AG04449 (cell line): ENCODE measurements at regions of chr7 and their contacts with region 1.

Region 1: GRCh38 chr7:98841179-98841997 is 28.4 kb downstream of the TMEM130 start:
- DNase-seq: peak; percentile 28
- H3K4me3 ChIP-seq: no peak overlapping the region
- CTCF ChIP-seq: peak; percentile 98

Region 2: GRCh38 chr7:97580205-97580604 is 1261.2 kb before region 1 on chr7:
- CTCF ChIA-PET with region 1: no interaction called
- POLR2A ChIA-PET with region 1: no interaction called
- DNase-seq: no peak
- H3K4me3 ChIP-seq: no peak overlapping the region
- CTCF ChIP-seq: no peak

Region 3: GRCh38 chr7:98314469-98314868 is 526.9 kb before region 1 on chr7:
- CTCF ChIA-PET with region 1: no interaction called
- POLR2A ChIA-PET with region 1: no interaction called
- DNase-seq: no peak
- H3K4me3 ChIP-seq: no peak overlapping the region
- CTCF ChIP-seq: no peak

Region 4: GRCh38 chr7:98420966-98421612 is 420.3 kb before region 1 on chr7:
- CTCF ChIA-PET with region 1: interaction called, 33 read pairs
- POLR2A ChIA-PET with region 1: no interaction called
- DNase-seq: no peak
- H3K4me3 ChIP-seq: no peak overlapping the region
- CTCF ChIP-seq: peak; percentile 96

Region 5: GRCh38 chr7:98434095-98434494 is 407.3 kb before region 1 on chr7:
- CTCF ChIA-PET with region 1: interaction called, 135 read pairs
- POLR2A ChIA-PET with region 1: no interaction called
- DNase-seq: no peak
- H3K4me3 ChIP-seq: no peak overlapping the region
- CTCF ChIP-seq: no peak

Region 6: GRCh38 chr7:98826387-98827231 is 14.8 kb before region 1 on chr7:
- CTCF ChIA-PET with region 1: interaction called, 72 read pairs
- POLR2A ChIA-PET with region 1: no interaction called
- DNase-seq: no peak
- H3K4me3 ChIP-seq: no peak overlapping the region
- CTCF ChIP-seq: no peak

Region 7: DNA sequence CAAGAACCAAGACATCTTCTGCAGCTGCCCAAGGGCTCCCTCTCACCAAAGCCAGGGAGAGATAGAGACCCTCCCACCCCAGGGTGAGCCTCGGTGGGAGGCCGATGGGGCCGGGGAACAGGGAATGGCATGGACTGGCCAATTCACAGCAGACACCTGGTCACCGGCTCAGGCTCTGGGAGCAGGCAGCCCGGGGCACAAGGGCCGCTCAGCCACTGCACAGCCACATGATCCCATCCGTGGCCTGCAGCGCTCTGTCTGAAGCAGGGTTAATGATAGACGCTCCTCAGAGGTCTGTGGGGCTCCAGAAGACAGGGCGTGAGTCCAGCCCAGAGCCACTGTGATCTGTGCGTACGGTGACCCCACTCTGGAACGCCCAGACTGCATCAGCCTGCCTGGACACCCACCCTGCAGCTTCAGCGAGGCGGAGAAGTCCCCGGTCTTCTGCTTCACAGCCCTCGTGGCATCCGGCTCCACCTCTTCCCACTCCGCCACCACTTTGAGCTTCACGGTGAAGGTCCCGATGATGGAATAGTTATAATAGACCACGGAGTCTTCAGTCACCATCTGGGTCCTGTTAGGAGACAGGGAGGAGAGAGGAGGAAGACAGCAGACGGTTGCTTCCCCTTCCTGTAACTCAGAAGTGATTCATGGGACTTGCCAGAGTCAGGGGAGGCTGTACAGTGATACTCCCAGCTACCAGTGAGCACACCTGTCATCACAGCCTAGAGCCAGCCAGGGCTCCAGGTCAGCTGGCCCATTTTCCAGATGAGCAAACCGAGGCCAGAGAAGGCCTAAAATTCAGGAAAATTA is 14.4 kb after region 1 on chr7:
- CTCF ChIA-PET with region 1: interaction called, 48 read pairs
- POLR2A ChIA-PET with region 1: interaction called, 3 read pairs
- DNase-seq: no peak
- H3K4me3 ChIP-seq: no peak overlapping the region
- CTCF ChIP-seq: no peak

Region 8: GRCh38 chr7:99014113-99014985 is 173.0 kb after region 1 on chr7:
- CTCF ChIA-PET with region 1: no interaction called
- POLR2A ChIA-PET with region 1: no interaction called
- DNase-seq: no peak
- H3K4me3 ChIP-seq: no peak overlapping the region
- CTCF ChIP-seq: no peak

Region 9: GRCh38 chr7:99079104-99079503 is 237.7 kb after region 1 on chr7:
- CTCF ChIA-PET with region 1: no interaction called
- POLR2A ChIA-PET with region 1: no interaction called
- DNase-seq: no peak
- H3K4me3 ChIP-seq: no peak overlapping the region
- CTCF ChIP-seq: no peak